ENCODE measurements at regions of chr15 and their contacts with region 1.

Region 1: GRCh38 chr15:60212536-60212935 is 185.2 kb downstream of the ANXA2 start:
- DNase-seq: no peak
- H3K4me3 ChIP-seq: no peak overlapping the region
- CTCF ChIP-seq: no peak

Region 2: GRCh38 chr15:60155666-60156065 is 56.9 kb before region 1 on chr15:
- in situ Hi-C with region 1: no loop called
- DNase-seq: no peak
- H3K4me3 ChIP-seq: no peak overlapping the region
- CTCF ChIP-seq: no peak

Region 3: DNA sequence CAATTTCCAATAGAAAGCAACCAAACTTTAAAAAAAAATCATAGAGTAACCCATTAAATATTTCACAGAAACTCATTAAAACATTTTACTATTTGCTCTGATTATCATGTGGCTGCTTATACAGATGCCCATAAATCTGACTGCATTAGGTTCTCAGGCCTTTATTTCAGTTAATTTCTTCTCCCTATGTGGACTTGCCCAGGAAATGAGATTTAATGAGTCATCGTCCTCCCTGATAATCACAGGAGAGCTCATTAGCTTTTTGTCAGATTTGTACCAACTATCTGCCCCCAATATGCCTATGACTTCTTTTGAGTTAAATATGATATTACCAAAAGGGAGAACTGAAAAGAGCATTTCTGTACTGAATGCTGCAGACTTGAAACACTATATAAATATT is 40.4 kb before region 1 on chr15:
- in situ Hi-C with region 1: no loop called
- DNase-seq: no peak
- H3K4me3 ChIP-seq: no peak overlapping the region
- CTCF ChIP-seq: no peak

Region 4: GRCh38 chr15:60255390-60255789 is 42.9 kb after region 1 on chr15:
- in situ Hi-C with region 1: loop called (anchors 5 kb)
- DNase-seq: no peak
- H3K4me3 ChIP-seq: no peak overlapping the region
- CTCF ChIP-seq: no peak